Colonic mucosa (tissue), 4 donors: ENCODE measurements at regions of chr17 and their contacts with region 1.

Region 1: DNA sequence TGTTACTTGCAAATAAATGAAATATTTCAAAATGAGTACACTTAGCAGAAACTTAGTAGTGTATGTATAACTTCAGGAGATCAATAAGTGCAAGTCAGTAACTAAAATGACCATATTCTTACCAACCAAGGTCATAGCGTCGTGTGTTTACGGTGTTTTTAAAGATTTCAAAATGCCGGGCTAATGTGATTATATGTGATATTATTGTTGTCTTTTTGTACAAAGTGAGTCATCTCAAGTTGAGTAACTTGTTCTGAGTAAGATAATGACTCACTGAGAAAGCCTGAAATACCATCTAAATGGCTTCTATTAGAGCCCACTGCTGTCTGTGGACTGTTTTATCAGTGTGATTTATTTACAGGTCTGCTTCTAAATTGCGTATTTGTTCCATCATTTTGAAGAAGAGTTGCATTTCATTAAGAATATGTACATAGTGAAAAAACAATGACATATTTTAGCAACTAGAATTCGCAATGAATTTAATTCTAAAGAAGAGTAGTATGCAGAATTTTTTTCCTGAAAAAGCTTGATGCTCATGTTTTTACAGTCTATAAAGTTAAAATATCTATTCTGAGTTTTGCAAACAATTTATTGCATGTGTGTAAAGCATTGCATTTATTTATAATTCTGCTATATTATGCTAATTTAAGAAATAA is 12.7 kb downstream of the KRT12 start:
- DNase-seq: no peak
- H3K4me3 ChIP-seq: no peak overlapping the region
- H3K27ac ChIP-seq: no peak overlapping the region
- H3K4me1 ChIP-seq: no peaks in the 10 kb centered on the region
- H3K27me3 ChIP-seq: no peaks in the 10 kb centered on the region
- CTCF ChIP-seq: no peak

Region 2: GRCh38 chr17:41322094-41322902 is 468.0 kb after region 1 on chr17:
- intact Hi-C with region 1: loop called (anchors 10 kb)
- DNase-seq: no peak
- H3K4me3 ChIP-seq: no peak overlapping the region
- H3K27ac ChIP-seq: no peak overlapping the region
- H3K4me1 ChIP-seq: no peaks in the 10 kb centered on the region
- H3K27me3 ChIP-seq: no peaks in the 10 kb centered on the region
- CTCF ChIP-seq: peak; percentile 79